ENCODE measurements at regions of chr2 and their contacts with region 1.

Region 1: DNA sequence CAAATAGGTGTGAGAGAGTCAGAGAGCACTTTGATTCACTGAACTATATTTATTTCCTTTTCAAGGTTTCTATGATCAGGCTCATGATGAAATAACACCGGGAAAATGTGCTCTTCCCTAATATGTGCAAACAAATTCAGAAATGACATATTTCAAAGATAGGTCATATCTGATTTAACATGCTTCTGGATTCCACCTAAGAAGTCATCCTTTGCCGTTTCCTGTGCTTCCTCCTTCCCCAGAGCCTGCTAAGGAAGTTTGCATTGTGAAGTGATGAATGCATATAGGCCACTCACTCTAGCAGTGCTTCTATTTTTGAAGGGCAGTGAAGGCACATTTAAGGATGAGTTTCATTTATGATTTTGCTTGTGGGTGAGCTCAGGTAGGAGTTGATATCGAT is 327.6 kb downstream of the TDRD15 start:
- DNase-seq: no peak
- ATAC-seq: no peak
- H3K4me3 ChIP-seq: no peak overlapping the region
- H3K4me3 Mint-ChIP-seq: no peak overlapping the region
- H3K27ac ChIP-seq: no peak overlapping the region
- H3K27ac Mint-ChIP-seq: no peak overlapping the region
- H3K4me1 ChIP-seq: no peaks in the 10 kb centered on the region
- H3K4me1 Mint-ChIP-seq: no peaks in the 10 kb centered on the region
- H3K27me3 ChIP-seq: no peaks in the 10 kb centered on the region
- H3K27me3 Mint-ChIP-seq: no peaks in the 10 kb centered on the region
- CTCF ChIP-seq: no peak

Region 2: GRCh38 chr2:21468609-21469008 is 17.2 kb after region 1 on chr2:
- CTCF ChIA-PET with region 1: no interaction called
- POLR2A ChIA-PET with region 1: no interaction called
- intact Hi-C with region 1: no loop called
- DNase-seq: no peak
- ATAC-seq: no peak
- H3K4me3 ChIP-seq: no peak overlapping the region
- H3K4me3 Mint-ChIP-seq: no peak overlapping the region
- H3K27ac ChIP-seq: no peak overlapping the region
- H3K27ac Mint-ChIP-seq: no peak overlapping the region
- H3K4me1 ChIP-seq: no peaks in the 10 kb centered on the region
- H3K4me1 Mint-ChIP-seq: no peaks in the 10 kb centered on the region
- H3K27me3 ChIP-seq: no peaks in the 10 kb centered on the region
- H3K27me3 Mint-ChIP-seq: no peaks in the 10 kb centered on the region
- CTCF ChIP-seq: no peak

Region 3: GRCh38 chr2:21489050-21489449 is 37.6 kb after region 1 on chr2:
- CTCF ChIA-PET with region 1: interaction called, 10 read pairs
- POLR2A ChIA-PET with region 1: no interaction called
- intact Hi-C with region 1: no loop called
- DNase-seq: no peak
- ATAC-seq: no peak
- H3K4me3 ChIP-seq: no peak overlapping the region
- H3K4me3 Mint-ChIP-seq: no peak overlapping the region
- H3K27ac ChIP-seq: no peak overlapping the region
- H3K27ac Mint-ChIP-seq: no peak overlapping the region
- H3K4me1 ChIP-seq: no peaks in the 10 kb centered on the region
- H3K4me1 Mint-ChIP-seq: no peaks in the 10 kb centered on the region
- H3K27me3 ChIP-seq: no peaks in the 10 kb centered on the region
- H3K27me3 Mint-ChIP-seq: no peaks in the 10 kb centered on the region
- CTCF ChIP-seq: no peak

Region 4: DNA sequence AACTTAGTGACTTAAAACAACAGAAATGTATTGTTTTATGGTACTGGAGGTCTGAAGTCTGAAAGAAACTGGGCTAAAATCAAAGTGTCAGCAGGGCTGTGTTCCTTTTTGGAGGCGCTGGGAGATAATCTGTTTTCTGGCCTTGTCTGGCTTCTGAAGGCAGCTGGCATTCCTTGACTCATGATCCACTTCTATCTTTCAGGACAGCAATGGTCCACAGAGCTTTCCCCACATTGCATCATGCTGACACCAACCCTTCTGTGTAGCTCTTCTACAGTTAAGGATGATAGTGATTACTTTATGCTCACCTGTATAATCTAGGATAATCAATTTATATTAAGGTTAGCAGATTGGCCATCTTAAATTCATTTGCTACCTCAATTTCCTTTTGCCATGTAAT is 64.5 kb after region 1 on chr2:
- CTCF ChIA-PET with region 1: no interaction called
- POLR2A ChIA-PET with region 1: no interaction called
- intact Hi-C with region 1: no loop called
- DNase-seq: no peak
- ATAC-seq: no peak
- H3K4me3 ChIP-seq: no peak overlapping the region
- H3K4me3 Mint-ChIP-seq: no peak overlapping the region
- H3K27ac ChIP-seq: no peak overlapping the region
- H3K27ac Mint-ChIP-seq: no peak overlapping the region
- H3K4me1 ChIP-seq: no peaks in the 10 kb centered on the region
- H3K4me1 Mint-ChIP-seq: no peaks in the 10 kb centered on the region
- H3K27me3 ChIP-seq: no peaks in the 10 kb centered on the region
- H3K27me3 Mint-ChIP-seq: no peaks in the 10 kb centered on the region
- CTCF ChIP-seq: no peak